ENCODE measurements at regions of chr16 and their contacts with region 1.

Region 1: DNA sequence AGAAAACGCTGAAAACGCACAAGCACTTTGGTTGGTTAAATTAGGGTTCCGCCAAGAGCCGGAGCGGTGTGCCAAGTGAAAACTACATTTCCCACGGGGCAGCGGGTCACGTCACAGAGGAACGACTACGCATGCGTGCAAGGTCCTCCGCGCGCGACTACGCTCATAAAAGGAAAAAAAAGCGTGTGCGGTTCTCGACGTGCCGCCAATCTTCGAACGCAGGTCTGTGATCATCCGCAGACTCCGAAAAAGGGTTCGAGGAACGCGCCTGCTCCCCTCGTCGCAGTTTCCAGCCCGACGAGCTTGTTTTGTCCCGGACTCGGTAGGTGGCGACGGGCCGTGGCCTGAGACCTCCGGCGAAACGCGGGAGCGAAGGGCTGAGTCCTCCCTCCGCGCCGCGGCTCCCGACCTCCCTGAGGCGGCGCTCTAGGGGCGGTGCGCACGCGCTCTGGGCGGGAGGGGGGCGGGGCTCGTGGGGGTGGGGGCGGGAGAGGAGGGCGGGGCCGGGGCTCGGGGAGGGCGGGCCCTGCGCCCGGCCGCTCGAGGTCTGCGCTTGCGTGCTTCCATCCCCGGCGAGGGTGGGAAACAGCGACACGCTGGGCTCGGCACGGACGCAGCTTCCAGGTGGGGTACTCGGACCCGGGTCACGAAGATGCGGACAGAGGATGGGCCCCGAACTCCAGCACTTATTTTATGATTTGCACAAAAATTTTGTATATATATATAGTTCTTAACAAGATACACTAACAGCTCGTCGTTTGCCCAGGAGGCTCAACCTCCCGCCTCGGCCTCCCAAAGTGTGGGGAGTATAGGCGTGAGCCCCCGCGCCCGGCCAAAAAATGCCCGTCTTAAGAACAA is at the start of gene SGF29:
- DNase-seq: peak; percentile 87 to 97 (median 94)
- ATAC-seq: peak; percentile 96
- H3K4me3 ChIP-seq: peak within 1 kb of the TSS; percentile 97
- H3K4me3 Mint-ChIP-seq: peak within 1 kb of the TSS; percentile 90 to 99 (median 94)
- H3K27ac ChIP-seq: peak within 1 kb of the TSS; percentile 96
- H3K27ac Mint-ChIP-seq: peak within 1 kb of the TSS; percentile 91 to 99 (median 97)
- H3K4me1 ChIP-seq: peaks cover 12 to 22% of the 10 kb centered on the region in 2 donors
- H3K4me1 Mint-ChIP-seq: peaks cover 22 to 54% (median 41%) of the 10 kb centered on the region in 7 donors
- H3K27me3 ChIP-seq: no peaks in the 10 kb centered on the region
- H3K27me3 Mint-ChIP-seq: no peaks in the 10 kb centered on the region
- total RNA-seq, gene SGF29: 41.5 to 80.5 (median 55.0) TPM

Region 2: DNA sequence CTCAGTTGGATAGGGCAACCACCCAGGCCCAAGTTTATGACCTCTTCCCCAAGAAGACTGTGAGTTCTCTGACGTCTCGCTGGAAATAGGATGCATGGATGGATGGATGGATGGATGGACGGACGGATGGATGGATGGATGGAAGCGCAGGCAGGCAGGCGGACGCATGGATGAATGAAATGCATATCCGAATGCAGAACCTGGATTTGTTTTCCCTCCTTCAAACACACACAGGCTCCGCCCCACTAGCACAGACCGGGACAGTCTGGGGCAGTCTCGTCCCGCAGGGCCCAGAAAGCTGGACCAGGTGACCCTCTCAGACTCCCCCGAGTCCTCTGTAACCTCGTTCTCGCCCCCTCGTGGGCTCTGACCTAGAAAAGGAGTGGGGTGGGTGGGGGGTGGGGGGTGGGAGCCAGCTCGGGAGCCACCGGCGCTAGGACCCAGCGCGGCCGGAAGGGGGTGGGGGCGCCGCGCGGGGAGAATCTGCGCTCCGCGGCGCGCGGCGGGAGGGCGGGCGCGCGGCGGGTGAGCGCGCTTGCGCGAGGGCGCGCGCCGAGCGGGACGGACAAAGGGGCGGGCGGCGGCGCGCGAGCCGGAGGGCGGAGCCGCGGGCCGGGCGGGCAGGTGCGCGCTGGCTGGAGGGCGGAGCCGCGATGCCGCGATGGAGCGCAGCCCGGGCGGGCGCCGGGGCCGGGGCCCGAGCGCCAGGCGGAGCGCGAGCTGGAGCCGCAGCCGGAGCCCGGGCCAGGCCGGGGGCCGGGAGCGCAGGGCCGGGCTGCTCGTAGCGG is 261.9 kb before region 1 on chr16 and contains the start of gene SBK1:
- CTCF ChIA-PET with region 1: no interaction called
- POLR2A ChIA-PET with region 1: no interaction called
- intact Hi-C with region 1: loop called in 1 of 2 experiments (anchors 1 kb)
- DNase-seq: peak; percentile 75 to 90 (median 87)
- ATAC-seq: peak; percentile 97
- H3K4me3 ChIP-seq: peak within 1 kb of the TSS; percentile 94
- H3K4me3 Mint-ChIP-seq: peak within 1 kb of the TSS; percentile 93 to 97 (median 96)
- H3K27ac ChIP-seq: peak within 1 kb of the TSS; percentile 87
- H3K27ac Mint-ChIP-seq: peak within 1 kb of the TSS; percentile 78 to 96 (median 88)
- H3K4me1 ChIP-seq: peaks cover 49 to 59% of the 10 kb centered on the region in 2 donors
- H3K4me1 Mint-ChIP-seq: peaks cover 49 to 76% (median 69%) of the 10 kb centered on the region in 7 donors
- H3K27me3 ChIP-seq: no peaks in the 10 kb centered on the region
- H3K27me3 Mint-ChIP-seq: peaks cover 0 to 27% (median 0%) of the 10 kb centered on the region in 5 donors
- total RNA-seq, gene SBK1: 6.0 to 19.9 (median 17.9) TPM

Region 3: DNA sequence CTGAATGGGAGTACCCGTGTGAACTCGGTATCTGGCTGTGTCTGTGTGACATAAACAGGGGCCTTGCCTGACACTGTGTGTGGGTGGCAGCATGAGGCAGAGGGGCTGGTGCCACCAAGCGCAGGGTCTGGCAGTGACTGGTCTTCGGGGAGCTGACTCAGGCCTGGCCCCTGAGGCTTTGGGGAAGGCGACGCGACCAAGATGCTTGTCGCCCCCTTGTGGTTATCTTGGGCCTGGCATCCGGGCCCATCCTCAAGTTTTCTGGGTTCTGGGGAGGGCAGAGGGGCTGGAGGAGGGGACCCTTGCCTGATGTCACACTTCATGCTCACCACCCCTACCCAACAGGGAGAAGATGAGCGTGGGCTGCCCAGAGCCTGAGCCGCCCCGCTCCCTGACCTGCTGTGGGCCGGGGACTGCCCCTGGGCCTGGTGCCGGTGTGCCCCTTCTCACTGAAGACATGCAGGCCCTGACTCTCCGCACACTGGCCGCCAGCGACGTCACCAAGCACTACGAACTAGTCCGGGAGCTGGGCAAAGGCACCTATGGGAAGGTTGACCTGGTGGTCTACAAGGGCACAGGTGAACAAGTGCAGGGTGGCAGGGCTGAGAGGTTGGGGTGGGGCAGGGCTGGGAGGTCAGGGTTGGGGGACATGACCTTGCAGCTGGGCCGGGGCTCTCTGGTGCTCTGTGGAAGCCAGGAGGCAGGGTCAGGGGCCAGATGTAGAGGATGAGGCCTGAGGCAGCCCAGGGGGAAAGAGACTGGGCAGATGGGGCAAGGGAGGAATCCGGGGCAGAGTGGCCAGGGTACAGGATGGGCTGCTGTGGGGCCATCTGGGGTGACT is 236.7 kb before region 1 on chr16:
- CTCF ChIA-PET with region 1: no interaction called
- POLR2A ChIA-PET with region 1: no interaction called
- intact Hi-C with region 1: loop called in 1 of 2 experiments (anchors 2 kb)
- DNase-seq: peak; percentile 45 to 82 (median 64)
- ATAC-seq: peak; percentile 84
- H3K4me3 ChIP-seq: no peak overlapping the region
- H3K4me3 Mint-ChIP-seq: peak overlapping the region in 7 of 10 donors; percentile 13 to 63 (median 38)
- H3K27ac ChIP-seq: peak overlapping the region; percentile 38
- H3K27ac Mint-ChIP-seq: peak overlapping the region; percentile 33 to 90 (median 82)
- H3K4me1 ChIP-seq: peaks cover 25 to 30% of the 10 kb centered on the region in 2 donors
- H3K4me1 Mint-ChIP-seq: peaks cover 8 to 49% (median 28%) of the 10 kb centered on the region in 7 donors
- H3K27me3 ChIP-seq: no peaks in the 10 kb centered on the region
- H3K27me3 Mint-ChIP-seq: no peaks in the 10 kb centered on the region

Region 4: GRCh38 chr16:28473714-28474265 is 80.2 kb before region 1 on chr16:
- CTCF ChIA-PET with region 1: no interaction called
- POLR2A ChIA-PET with region 1: no interaction called
- intact Hi-C with region 1: no loop called
- DNase-seq: peak in 1 of 9 donors; percentile 21
- ATAC-seq: no peak
- H3K4me3 ChIP-seq: no peak overlapping the region
- H3K4me3 Mint-ChIP-seq: no peak overlapping the region
- H3K27ac ChIP-seq: no peak overlapping the region
- H3K27ac Mint-ChIP-seq: peak overlapping the region in 7 of 9 donors; percentile 29 to 81 (median 52)
- H3K4me1 ChIP-seq: peaks cover 0 to 3% of the 10 kb centered on the region in 2 donors
- H3K4me1 Mint-ChIP-seq: peaks cover 0 to 7% (median 5%) of the 10 kb centered on the region in 7 donors
- H3K27me3 ChIP-seq: no peaks in the 10 kb centered on the region
- H3K27me3 Mint-ChIP-seq: no peaks in the 10 kb centered on the region

Region 5: DNA sequence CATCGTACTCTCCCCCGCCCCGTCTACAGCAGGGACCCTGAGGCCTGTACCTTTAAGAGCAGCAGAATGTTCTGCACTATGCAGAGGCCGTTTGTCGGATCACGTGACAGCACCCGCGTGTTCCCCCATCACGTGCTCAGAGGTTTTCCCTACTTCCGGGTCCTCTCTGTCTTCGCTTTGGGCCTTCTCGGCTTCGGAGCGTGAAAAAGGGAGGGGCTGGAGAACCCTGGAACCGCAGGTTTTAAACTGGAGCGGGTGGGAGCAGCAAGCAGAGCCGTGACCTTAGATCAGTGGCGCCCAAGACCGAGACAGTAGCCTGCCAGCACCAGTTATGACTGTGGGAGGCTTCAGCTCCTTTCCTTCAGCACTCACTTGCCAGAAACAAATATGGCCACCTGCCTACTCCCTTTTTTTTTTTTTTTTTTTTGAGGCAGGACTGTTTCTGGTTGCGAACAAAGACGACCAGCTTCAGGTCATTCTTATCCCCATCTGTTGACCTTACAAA is 62.0 kb before region 1 on chr16 and contains the start of gene CLN3:
- CTCF ChIA-PET with region 1: interaction called, 10 read pairs
- POLR2A ChIA-PET with region 1: interaction called, 27 read pairs
- intact Hi-C with region 1: loop called (anchors 1 kb)
- DNase-seq: peak; percentile 73 to 95 (median 93)
- ATAC-seq: peak; percentile 78
- H3K4me3 ChIP-seq: peak within 1 kb of the TSS; percentile 98
- H3K4me3 Mint-ChIP-seq: peak within 1 kb of the TSS; percentile 95 to 100 (median 98)
- H3K27ac ChIP-seq: peak within 1 kb of the TSS; percentile 95
- H3K27ac Mint-ChIP-seq: peak within 1 kb of the TSS; percentile 99 to 100 (median 100)
- H3K4me1 ChIP-seq: peaks cover 31 to 40% of the 10 kb centered on the region in 2 donors
- H3K4me1 Mint-ChIP-seq: peaks cover 41 to 77% (median 62%) of the 10 kb centered on the region in 7 donors
- H3K27me3 ChIP-seq: no peaks in the 10 kb centered on the region
- H3K27me3 Mint-ChIP-seq: no peaks in the 10 kb centered on the region
- total RNA-seq, gene CLN3: 56.5 to 76.3 (median 70.7) TPM

Region 6: DNA sequence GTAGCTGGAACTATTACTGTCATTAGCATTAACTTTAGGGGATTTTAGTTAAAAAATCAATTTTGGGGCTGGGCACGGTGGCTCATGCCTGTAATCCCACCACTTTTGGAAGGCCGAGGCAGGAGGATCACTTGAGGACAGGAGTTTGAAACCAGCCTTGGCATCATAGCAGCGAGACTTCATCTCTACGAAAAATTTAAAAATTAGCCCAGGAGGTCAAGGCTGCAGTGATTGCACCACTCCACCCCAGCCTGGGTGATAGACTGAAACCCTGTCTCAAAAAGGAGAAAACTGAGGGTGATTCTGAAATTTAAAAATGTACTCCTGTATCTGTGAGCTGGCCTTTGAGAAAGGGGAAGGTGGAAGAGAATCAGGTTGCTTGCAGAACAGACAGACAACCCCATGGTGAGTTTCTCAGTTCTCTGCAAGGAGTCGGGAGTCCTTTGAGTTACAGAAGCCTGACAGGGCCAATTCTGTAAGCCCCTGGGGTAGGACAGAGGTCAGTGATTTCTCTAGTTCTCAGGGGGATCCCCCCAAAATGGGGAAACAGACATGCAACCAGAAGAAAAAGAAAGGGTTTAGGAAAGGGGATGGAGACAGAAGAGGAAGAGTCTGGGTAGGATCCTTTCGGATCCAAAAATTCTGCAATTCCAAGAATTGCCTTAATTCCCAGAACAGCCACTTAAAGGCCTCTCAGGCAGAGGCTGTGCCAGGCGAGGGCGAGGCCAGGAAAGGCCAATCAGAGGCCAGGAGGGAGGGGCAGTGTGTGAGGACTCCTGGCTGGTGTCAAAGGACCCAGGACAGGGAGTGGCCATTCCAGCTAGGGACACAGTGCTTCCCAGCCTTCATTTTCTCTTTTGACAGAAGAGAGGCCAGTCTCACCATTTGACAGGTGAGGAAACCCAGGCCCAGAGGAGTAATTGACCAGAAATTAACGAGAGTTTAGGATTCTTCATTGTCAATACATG is 21.9 kb before region 1 on chr16:
- CTCF ChIA-PET with region 1: interaction called, 3 read pairs
- POLR2A ChIA-PET with region 1: interaction called, 12 read pairs
- intact Hi-C with region 1: no loop called
- DNase-seq: no peak
- ATAC-seq: no peak
- H3K4me3 ChIP-seq: no peak overlapping the region
- H3K4me3 Mint-ChIP-seq: peak overlapping the region in 1 of 10 donors; percentile 23
- H3K27ac ChIP-seq: no peak overlapping the region
- H3K27ac Mint-ChIP-seq: peak overlapping the region in 7 of 9 donors; percentile 63 to 93 (median 66)
- H3K4me1 ChIP-seq: peaks cover 19% of the 10 kb centered on the region in 2 donors
- H3K4me1 Mint-ChIP-seq: peaks cover 18 to 48% (median 38%) of the 10 kb centered on the region in 7 donors
- H3K27me3 ChIP-seq: no peaks in the 10 kb centered on the region
- H3K27me3 Mint-ChIP-seq: no peaks in the 10 kb centered on the region

Region 7: GRCh38 chr16:28950648-28951409 is 396.8 kb after region 1 on chr16 and contains the start of gene NFATC2IP:
- CTCF ChIA-PET with region 1: no interaction called
- POLR2A ChIA-PET with region 1: no interaction called
- intact Hi-C with region 1: loop called in 1 of 2 experiments (anchors 5 kb)
- DNase-seq: peak; percentile 98 to 100 (median 99)
- ATAC-seq: peak; percentile 98
- H3K4me3 ChIP-seq: peak within 1 kb of the TSS; percentile 73
- H3K4me3 Mint-ChIP-seq: peak within 1 kb of the TSS; percentile 75 to 100 (median 92)
- H3K27ac ChIP-seq: peak within 1 kb of the TSS; percentile 81
- H3K27ac Mint-ChIP-seq: peak within 1 kb of the TSS; percentile 67 to 94 (median 86)
- H3K4me1 ChIP-seq: peaks cover 10 to 14% of the 10 kb centered on the region in 2 donors
- H3K4me1 Mint-ChIP-seq: peaks cover 10 to 41% (median 37%) of the 10 kb centered on the region in 7 donors
- H3K27me3 ChIP-seq: no peaks in the 10 kb centered on the region
- H3K27me3 Mint-ChIP-seq: peaks cover 0 to 6% (median 0%) of the 10 kb centered on the region in 5 donors
- total RNA-seq, gene NFATC2IP: 70.9 to 117 (median 111) TPM